Adrenal gland (tissue), 19 donors: ENCODE measurements at regions of chr11 and their contacts with region 1.

Region 1: DNA sequence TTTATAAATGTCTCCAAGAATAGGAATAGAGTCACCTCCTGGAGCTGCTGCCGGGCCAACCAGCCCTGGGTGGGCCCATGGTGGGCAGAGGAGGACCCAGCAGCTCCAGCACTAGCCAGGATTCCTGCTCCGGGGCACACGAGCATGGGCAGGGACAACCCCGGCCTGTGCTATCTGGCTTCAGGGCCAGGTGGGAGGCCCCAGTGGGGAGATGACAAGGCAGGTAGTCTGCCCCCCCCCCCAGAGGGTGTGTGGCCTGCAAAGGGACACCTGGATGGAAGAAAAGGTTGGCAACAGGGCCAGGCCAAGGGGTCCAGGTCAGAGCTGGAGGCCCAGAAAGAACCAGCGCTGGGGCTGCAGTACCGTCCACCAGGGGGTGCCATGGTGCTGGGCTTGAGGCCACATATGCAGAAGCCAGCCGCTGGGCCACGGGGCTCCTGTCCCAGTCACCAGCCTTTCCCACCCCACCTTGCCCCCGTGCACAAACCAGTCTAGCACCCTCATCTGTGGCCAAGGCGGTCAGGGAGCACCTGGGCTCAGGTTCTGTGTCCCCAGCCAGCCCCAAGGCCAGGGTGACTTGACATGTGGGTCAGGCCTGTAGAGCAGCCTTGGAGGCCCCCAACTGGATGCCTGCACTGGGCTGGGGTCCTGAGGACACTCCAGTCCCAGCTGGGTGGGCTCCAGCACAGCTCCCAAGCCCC is 3.5 kb downstream of the TSPAN32 start:
- DNase-seq: peak; percentile 78 to 94 (median 88)
- H3K4me3 ChIP-seq: no peak overlapping the region
- H3K27ac ChIP-seq: peak overlapping the region in 3 of 5 donors; percentile 19 to 83 (median 70)
- H3K4me1 ChIP-seq: peaks cover 0 to 27% of the 10 kb centered on the region in 2 donors
- H3K27me3 ChIP-seq: no peaks in the 10 kb centered on the region
- CTCF ChIP-seq: peak; percentile 80 to 96 (median 92)
- POLR2A ChIP-seq: no peak

Region 2: GRCh38 chr11:2420502-2421225 is 115.4 kb after region 1 on chr11:
- intact Hi-C with region 1: loop called (anchors 1 to 2 kb)
- DNase-seq: peak; percentile 58 to 82 (median 78)
- H3K4me3 ChIP-seq: no peak overlapping the region
- H3K27ac ChIP-seq: no peak overlapping the region
- H3K4me1 ChIP-seq: peaks cover 0 to 4% of the 10 kb centered on the region in 2 donors
- H3K27me3 ChIP-seq: peaks cover 3% of the 10 kb centered on the region
- CTCF ChIP-seq: peak; percentile 83 to 96 (median 92)
- POLR2A ChIP-seq: no peak